Breast epithelium (tissue), 4 donors: ENCODE measurements at regions of chr3 and their contacts with region 1.

Region 1: GRCh38 chr3:143443851-143444331 is 324.3 kb downstream of the CHST2 start:
- DNase-seq: peak in 1 of 2 donors; percentile 68
- H3K4me3 ChIP-seq: no peak overlapping the region
- H3K27ac ChIP-seq: peak overlapping the region; percentile 68 to 70
- H3K4me1 ChIP-seq: no peaks in the 10 kb centered on the region
- H3K27me3 ChIP-seq: no peaks in the 10 kb centered on the region
- CTCF ChIP-seq: no peak
- POLR2A ChIP-seq: no peak

Region 2: GRCh38 chr3:143464850-143465249 is 21.0 kb after region 1 on chr3:
- intact Hi-C with region 1: loop called (anchors 2 kb)
- DNase-seq: no peak
- H3K4me3 ChIP-seq: no peak overlapping the region
- H3K27ac ChIP-seq: no peak overlapping the region
- H3K4me1 ChIP-seq: no peaks in the 10 kb centered on the region
- H3K27me3 ChIP-seq: no peaks in the 10 kb centered on the region
- CTCF ChIP-seq: no peak
- POLR2A ChIP-seq: no peak

Region 3: GRCh38 chr3:143502081-143502480 is 58.2 kb after region 1 on chr3:
- intact Hi-C with region 1: no loop called
- DNase-seq: no peak
- H3K4me3 ChIP-seq: no peak overlapping the region
- H3K27ac ChIP-seq: no peak overlapping the region
- H3K4me1 ChIP-seq: no peaks in the 10 kb centered on the region
- H3K27me3 ChIP-seq: no peaks in the 10 kb centered on the region
- CTCF ChIP-seq: no peak
- POLR2A ChIP-seq: no peak